A673 (cell line): ENCODE measurements at regions of chrX and their contacts with region 1.

Region 1: GRCh38 chrX:149962859-149963757 is 24.8 kb upstream of the EOLA2 start:
- DNase-seq: peak; percentile 76
- H3K4me3 ChIP-seq: no peak overlapping the region
- H3K27ac ChIP-seq: no peak overlapping the region
- H3K4me1 ChIP-seq: no peaks in the 10 kb centered on the region
- H3K27me3 ChIP-seq: no peaks in the 10 kb centered on the region
- CTCF ChIP-seq: peak; percentile 78

Region 2: GRCh38 chrX:150365051-150365989 is 402.2 kb after region 1 on chrX:
- CTCF ChIA-PET with region 1: no interaction called
- POLR2A ChIA-PET with region 1: no interaction called
- intact Hi-C with region 1: loop called (anchors 2 kb)
- DNase-seq: peak; percentile 79
- H3K4me3 ChIP-seq: peak overlapping the region; percentile 53
- H3K27ac ChIP-seq: peak overlapping the region; percentile 74
- H3K4me1 ChIP-seq: no peaks in the 10 kb centered on the region
- H3K27me3 ChIP-seq: peaks cover 21% of the 10 kb centered on the region
- CTCF ChIP-seq: peak; percentile 63

Region 3: GRCh38 chrX:150486011-150486410 is 522.9 kb after region 1 on chrX:
- CTCF ChIA-PET with region 1: no interaction called
- POLR2A ChIA-PET with region 1: no interaction called
- intact Hi-C with region 1: loop called (anchors 5 kb)
- DNase-seq: peak; percentile 65
- H3K4me3 ChIP-seq: no peak overlapping the region
- H3K27ac ChIP-seq: no peak overlapping the region
- H3K4me1 ChIP-seq: no peaks in the 10 kb centered on the region
- H3K27me3 ChIP-seq: no peaks in the 10 kb centered on the region
- CTCF ChIP-seq: peak; percentile 72

Region 4: DNA sequence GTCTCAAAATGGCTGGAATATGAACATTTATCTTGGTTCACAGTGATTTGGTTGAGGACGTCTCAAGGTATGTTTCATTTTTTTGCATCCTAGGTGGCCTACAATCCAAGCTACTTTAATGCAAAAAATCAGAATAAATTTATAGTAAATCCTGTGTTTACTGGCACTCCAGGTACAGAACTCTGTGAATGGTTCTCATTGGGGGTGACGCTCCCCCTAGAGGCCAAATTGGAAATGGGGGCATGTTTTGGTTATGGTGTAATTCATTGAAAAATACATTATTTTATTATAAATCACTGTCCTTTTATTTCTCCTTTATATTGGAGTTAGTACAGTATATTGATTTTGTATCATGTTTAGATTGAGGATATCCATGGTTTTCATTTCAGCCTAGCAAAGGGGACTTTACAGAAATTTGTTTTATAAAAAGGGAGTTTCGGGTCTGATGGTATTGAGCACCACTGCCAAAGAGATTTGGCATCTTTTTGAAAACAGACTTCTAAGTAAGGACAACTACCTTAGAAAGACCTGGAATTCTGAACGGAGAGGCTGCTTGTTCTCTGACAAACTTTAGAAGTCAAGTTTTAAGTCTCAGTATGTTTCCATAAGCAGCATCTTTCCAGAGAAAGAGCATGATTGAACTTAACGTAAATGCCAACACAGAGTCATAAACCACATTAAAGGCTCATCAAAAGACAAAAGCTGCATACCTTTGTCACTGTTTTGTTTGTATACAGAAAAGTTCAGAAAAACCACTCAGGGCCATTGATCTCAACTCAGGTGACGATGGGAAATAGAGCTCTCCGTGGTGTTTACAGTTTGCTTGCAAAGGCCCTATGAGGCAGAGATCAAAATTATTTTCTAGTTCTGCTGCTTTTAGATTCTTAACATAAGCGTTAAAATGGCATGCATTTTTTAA is 624.7 kb after region 1 on chrX:
- CTCF ChIA-PET with region 1: no interaction called
- POLR2A ChIA-PET with region 1: no interaction called
- intact Hi-C with region 1: loop called (anchors 5 kb)
- DNase-seq: peak; percentile 39
- H3K4me3 ChIP-seq: no peak overlapping the region
- H3K27ac ChIP-seq: no peak overlapping the region
- H3K4me1 ChIP-seq: no peaks in the 10 kb centered on the region
- H3K27me3 ChIP-seq: no peaks in the 10 kb centered on the region
- CTCF ChIP-seq: peak; percentile 83

Region 5: DNA sequence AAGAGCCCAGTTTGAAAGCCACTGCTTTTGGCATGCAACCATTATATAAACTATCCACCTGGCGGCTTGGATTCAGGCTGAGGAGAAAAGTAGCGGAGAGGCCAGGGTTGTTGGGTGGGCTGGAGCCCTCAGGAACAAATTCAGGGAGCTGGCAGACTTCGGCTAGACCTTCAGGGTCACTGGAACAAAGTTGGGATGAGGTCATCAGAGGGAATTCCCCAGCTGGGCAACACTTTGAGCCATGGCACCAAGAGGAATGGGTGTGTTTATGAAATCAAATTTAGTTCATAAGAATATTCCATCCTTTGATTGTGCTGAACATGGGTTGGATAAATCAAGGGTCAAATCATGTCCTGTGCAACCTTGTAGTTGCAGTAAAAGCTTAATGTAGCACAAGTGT is 752.1 kb after region 1 on chrX:
- CTCF ChIA-PET with region 1: interaction called, 4 read pairs
- POLR2A ChIA-PET with region 1: no interaction called
- intact Hi-C with region 1: loop called (anchors 1 kb)
- DNase-seq: no peak
- H3K4me3 ChIP-seq: no peak overlapping the region
- H3K27ac ChIP-seq: no peak overlapping the region
- H3K4me1 ChIP-seq: no peaks in the 10 kb centered on the region
- H3K27me3 ChIP-seq: no peaks in the 10 kb centered on the region
- CTCF ChIP-seq: no peak